ENCODE measurements at regions of chr16 and their contacts with region 1.

Region 1: GRCh38 chr16:10541366-10541765 is 39.0 kb downstream of the EMP2 start:
- DNase-seq: no peak
- ATAC-seq: no peak
- H3K4me3 ChIP-seq: no peak overlapping the region
- H3K4me3 Mint-ChIP-seq: no peak overlapping the region
- H3K27ac ChIP-seq: no peak overlapping the region
- H3K27ac Mint-ChIP-seq: no peak overlapping the region
- H3K4me1 ChIP-seq: no peaks in the 10 kb centered on the region
- H3K4me1 Mint-ChIP-seq: no peaks in the 10 kb centered on the region
- H3K27me3 ChIP-seq: peaks cover 0 to 6% of the 10 kb centered on the region in 2 experiments
- H3K27me3 Mint-ChIP-seq: peaks cover 3 to 10% of the 10 kb centered on the region in 2 donors

Region 2: DNA sequence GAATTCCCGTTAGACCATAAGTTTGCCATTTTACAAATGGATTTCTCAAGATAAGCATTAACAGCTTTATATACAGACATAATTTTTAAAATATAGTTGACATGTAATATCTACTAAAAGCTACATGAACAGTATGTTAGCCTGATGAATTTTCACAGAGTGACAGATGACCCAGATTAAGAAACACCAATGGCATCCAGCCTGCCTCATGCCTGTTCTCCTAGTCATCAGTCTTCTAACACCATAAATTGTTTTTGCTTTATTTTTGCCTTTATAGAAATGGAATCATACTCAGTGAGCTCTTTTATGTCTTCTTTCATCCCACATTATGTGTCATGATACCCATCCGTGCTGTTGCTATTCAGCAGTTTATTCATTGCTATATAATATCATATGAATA is 75.5 kb before region 1 on chr16:
- CTCF ChIA-PET with region 1: no interaction called
- POLR2A ChIA-PET with region 1: no interaction called
- DNase-seq: no peak
- ATAC-seq: no peak
- H3K4me3 ChIP-seq: no peak overlapping the region
- H3K4me3 Mint-ChIP-seq: no peak overlapping the region
- H3K27ac ChIP-seq: no peak overlapping the region
- H3K27ac Mint-ChIP-seq: no peak overlapping the region
- H3K4me1 ChIP-seq: no peaks in the 10 kb centered on the region
- H3K4me1 Mint-ChIP-seq: no peaks in the 10 kb centered on the region
- H3K27me3 ChIP-seq: no peaks in the 10 kb centered on the region
- H3K27me3 Mint-ChIP-seq: no peaks in the 10 kb centered on the region

Region 3: GRCh38 chr16:10688341-10689125 is 147.2 kb after region 1 on chr16:
- CTCF ChIA-PET with region 1: no interaction called
- POLR2A ChIA-PET with region 1: interaction called in 1 of 2 experiments, 18 read pairs
- DNase-seq: no peak
- ATAC-seq: no peak
- H3K4me3 ChIP-seq: no peak overlapping the region
- H3K4me3 Mint-ChIP-seq: no peak overlapping the region
- H3K27ac ChIP-seq: no peak overlapping the region
- H3K27ac Mint-ChIP-seq: no peak overlapping the region
- H3K4me1 ChIP-seq: no peaks in the 10 kb centered on the region
- H3K4me1 Mint-ChIP-seq: no peaks in the 10 kb centered on the region
- H3K27me3 ChIP-seq: peaks cover 0 to 36% of the 10 kb centered on the region in 2 experiments
- H3K27me3 Mint-ChIP-seq: peaks cover 15 to 45% of the 10 kb centered on the region in 2 donors

Region 4: DNA sequence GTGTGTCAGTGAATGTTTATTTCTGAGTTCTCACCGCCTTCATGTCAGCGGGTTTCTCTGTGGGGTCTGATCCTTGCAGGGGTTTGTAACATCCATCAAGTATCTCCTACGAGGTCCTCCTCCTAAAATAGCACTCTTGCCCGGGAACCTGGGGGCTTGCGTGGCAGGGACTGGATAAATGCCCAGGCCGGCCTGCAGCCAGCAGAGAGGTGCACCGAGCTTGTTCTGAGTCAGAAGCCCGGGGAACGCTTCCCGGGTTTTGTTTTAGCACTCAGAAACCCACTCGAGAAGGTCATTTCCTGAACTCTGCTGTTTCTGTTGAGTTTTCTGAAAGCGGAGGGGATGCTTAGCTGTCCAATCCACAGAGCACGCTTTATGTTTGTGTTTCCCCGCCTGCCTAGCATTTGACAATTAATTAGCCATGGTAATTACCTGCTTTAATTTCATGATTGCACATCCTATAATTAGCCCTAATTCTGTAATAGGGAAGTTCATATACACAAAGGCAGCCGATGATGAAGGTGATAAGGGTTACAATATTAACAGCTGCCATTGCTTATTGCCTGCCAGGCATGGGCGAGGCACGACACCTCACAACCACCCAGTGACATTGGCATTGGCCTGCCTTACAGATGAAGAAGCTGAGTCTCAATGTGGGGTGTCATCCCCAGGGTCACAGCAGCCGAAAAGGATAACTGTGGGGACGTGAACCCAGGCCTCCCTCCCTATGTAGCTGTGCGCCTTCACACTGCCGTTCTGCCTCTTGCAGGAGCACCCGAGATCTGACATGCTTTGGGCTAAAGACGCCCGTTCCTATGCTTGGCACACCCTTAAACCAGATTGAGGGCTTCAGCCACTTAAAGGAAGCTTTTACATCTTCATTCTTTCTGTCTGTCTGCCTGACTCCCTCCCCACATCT is 1929.2 kb after region 1 on chr16:
- CTCF ChIA-PET with region 1: no interaction called
- POLR2A ChIA-PET with region 1: no interaction called
- DNase-seq: no peak
- ATAC-seq: no peak
- H3K4me3 ChIP-seq: no peak overlapping the region
- H3K4me3 Mint-ChIP-seq: no peak overlapping the region
- H3K27ac ChIP-seq: no peak overlapping the region
- H3K27ac Mint-ChIP-seq: no peak overlapping the region
- H3K4me1 ChIP-seq: no peaks in the 10 kb centered on the region
- H3K4me1 Mint-ChIP-seq: peaks cover 0 to 5% (median 0%) of the 10 kb centered on the region in 3 donors
- H3K27me3 ChIP-seq: no peaks in the 10 kb centered on the region
- H3K27me3 Mint-ChIP-seq: no peaks in the 10 kb centered on the region